ENCODE measurements at regions of chr1 and their contacts with region 1.

Region 1: DNA sequence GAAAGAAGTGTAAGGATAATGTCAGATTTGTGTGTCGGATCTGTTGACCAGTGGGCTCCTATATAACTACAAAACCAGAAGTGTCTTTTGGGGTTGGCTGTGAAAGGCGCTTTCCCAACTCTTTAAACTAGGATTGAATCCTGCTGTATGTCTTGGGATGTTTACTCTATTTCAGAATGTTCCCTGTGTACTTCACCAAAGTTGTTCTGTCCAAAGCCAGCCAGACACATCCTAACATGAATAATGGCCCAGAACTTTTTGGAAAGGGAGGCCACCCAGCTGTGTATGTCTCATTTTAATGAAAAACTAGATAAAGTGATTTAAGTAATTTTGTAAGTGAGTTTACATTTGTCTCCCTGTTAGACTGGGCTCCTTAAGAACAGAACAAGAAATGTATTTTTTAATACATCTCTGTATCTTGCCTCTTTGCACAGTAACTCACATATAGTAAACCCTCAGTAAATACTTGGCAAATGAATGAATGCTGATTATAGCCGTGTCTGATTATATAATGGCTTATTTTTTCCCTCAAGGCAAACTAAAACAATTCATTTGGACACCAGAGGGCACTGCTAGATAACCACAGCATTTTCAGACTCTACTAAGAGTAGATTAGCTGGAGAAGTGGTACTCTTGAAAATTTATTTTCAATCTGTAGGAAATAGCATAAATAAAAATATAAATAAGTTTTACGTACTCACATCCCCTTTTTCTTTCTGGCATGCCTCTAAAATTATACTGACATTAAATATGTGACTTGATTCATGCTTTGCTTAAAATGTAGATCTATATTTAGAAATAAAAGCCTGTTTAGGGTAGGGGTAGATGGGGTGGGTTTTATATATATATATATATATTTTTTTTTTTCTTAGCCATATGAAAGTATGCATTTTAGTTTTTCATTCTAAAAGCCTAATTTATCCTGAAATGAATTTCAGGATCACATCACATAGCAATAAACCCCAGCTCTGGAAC is 23.8 kb downstream of the TSEN15 start:
- DNase-seq: peak in 1 of 2 experiments; percentile 52
- H3K4me3 ChIP-seq: no peak overlapping the region
- H3K4me3 Mint-ChIP-seq: no peak overlapping the region
- H3K27ac Mint-ChIP-seq: no peak overlapping the region
- H3K4me1 ChIP-seq: no peaks in the 10 kb centered on the region
- H3K4me1 Mint-ChIP-seq: no peaks in the 10 kb centered on the region
- H3K27me3 ChIP-seq: no peaks in the 10 kb centered on the region
- H3K27me3 Mint-ChIP-seq: no peaks in the 10 kb centered on the region
- CTCF ChIP-seq: peak; percentile 58 to 64

Region 2: GRCh38 chr1:184222652-184223052 is 147.3 kb after region 1 on chr1:
- CTCF ChIA-PET with region 1: interaction called, 10 read pairs
- POLR2A ChIA-PET with region 1: no interaction called
- intact Hi-C with region 1: loop called (anchors 1 kb)
- DNase-seq: peak in 1 of 2 experiments; percentile 66
- H3K4me3 ChIP-seq: no peak overlapping the region
- H3K4me3 Mint-ChIP-seq: no peak overlapping the region
- H3K27ac Mint-ChIP-seq: no peak overlapping the region
- H3K4me1 ChIP-seq: no peaks in the 10 kb centered on the region
- H3K4me1 Mint-ChIP-seq: peaks cover 6% of the 10 kb centered on the region
- H3K27me3 ChIP-seq: no peaks in the 10 kb centered on the region
- H3K27me3 Mint-ChIP-seq: peaks cover 7% of the 10 kb centered on the region
- CTCF ChIP-seq: peak; percentile 91 to 95

Region 3: DNA sequence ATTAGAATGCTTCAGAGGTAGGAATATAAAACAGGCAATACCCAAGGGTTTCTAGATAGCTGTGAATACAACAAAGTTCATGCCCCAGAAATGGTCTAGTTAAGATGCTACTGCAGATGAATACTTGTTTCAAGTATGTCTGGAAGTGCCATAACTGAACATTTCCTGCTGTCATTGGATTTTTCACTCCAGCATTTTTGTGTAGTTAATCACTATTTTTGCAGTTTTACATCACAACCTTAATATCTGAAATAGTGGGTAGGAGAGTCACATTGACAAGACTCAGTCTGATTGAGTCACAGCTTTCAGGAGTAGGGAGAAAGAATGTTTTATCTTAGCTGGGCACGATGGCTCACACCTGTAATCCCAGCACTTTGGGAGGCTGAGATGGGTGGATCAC is 185.0 kb after region 1 on chr1:
- CTCF ChIA-PET with region 1: no interaction called
- POLR2A ChIA-PET with region 1: no interaction called
- intact Hi-C with region 1: no loop called
- DNase-seq: no peak
- H3K4me3 ChIP-seq: no peak overlapping the region
- H3K4me3 Mint-ChIP-seq: no peak overlapping the region
- H3K27ac Mint-ChIP-seq: no peak overlapping the region
- H3K4me1 ChIP-seq: no peaks in the 10 kb centered on the region
- H3K4me1 Mint-ChIP-seq: no peaks in the 10 kb centered on the region
- H3K27me3 ChIP-seq: no peaks in the 10 kb centered on the region
- H3K27me3 Mint-ChIP-seq: peaks cover 23% of the 10 kb centered on the region
- CTCF ChIP-seq: no peak

Region 4: DNA sequence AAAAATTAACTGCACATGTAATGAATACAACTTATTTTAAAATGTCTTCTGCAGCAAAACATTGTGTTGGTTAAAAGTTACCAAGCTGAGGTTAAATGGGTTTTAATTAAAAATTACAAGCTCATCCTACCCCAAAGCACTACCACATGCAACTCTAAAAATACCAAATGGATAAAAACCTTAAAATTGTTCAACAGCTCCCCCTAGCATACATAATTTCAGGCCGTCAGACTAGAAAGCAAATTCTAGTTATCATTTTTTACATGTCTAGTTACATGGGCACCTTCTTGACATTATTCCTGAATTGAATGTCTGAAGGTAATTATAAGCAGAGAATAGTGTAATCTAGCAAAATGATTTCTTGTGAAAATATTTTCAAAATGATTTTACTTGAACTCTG is 488.0 kb after region 1 on chr1:
- CTCF ChIA-PET with region 1: no interaction called
- POLR2A ChIA-PET with region 1: no interaction called
- intact Hi-C with region 1: loop called (anchors 10 kb)
- DNase-seq: peak in 1 of 2 experiments; percentile 9
- H3K4me3 ChIP-seq: no peak overlapping the region
- H3K4me3 Mint-ChIP-seq: no peak overlapping the region
- H3K27ac Mint-ChIP-seq: no peak overlapping the region
- H3K4me1 ChIP-seq: no peaks in the 10 kb centered on the region
- H3K4me1 Mint-ChIP-seq: no peaks in the 10 kb centered on the region
- H3K27me3 ChIP-seq: no peaks in the 10 kb centered on the region
- H3K27me3 Mint-ChIP-seq: peaks cover 2% of the 10 kb centered on the region
- CTCF ChIP-seq: peak in 1 of 2 experiments; percentile 30

Region 5: DNA sequence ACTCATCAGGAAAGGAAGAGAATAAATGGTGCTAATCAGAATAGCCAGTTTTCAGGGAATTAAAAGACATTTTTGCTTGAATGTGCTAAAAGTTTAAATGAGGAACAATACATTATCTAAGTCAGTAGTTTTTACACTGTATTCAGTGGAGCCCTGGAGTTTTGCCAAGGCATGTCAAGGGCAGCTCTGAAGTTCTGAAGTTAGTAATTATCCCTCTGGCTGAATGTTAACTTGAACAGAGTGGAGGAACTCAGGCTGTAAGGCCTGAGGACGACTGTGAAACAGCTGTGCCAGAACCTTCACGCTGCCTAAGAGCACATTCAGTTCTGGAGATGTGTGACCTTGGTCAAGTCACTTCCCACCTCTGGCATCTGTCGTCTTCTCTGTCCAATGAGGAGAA is 611.2 kb after region 1 on chr1:
- CTCF ChIA-PET with region 1: interaction called, 12 read pairs
- POLR2A ChIA-PET with region 1: no interaction called
- intact Hi-C with region 1: loop called (anchors 1 kb)
- DNase-seq: no peak
- H3K4me3 ChIP-seq: no peak overlapping the region
- H3K4me3 Mint-ChIP-seq: no peak overlapping the region
- H3K27ac Mint-ChIP-seq: no peak overlapping the region
- H3K4me1 ChIP-seq: no peaks in the 10 kb centered on the region
- H3K4me1 Mint-ChIP-seq: no peaks in the 10 kb centered on the region
- H3K27me3 ChIP-seq: no peaks in the 10 kb centered on the region
- H3K27me3 Mint-ChIP-seq: no peaks in the 10 kb centered on the region
- CTCF ChIP-seq: no peak

Region 6: GRCh38 chr1:184691719-184692324 is 616.5 kb after region 1 on chr1:
- CTCF ChIA-PET with region 1: interaction called, 12 read pairs
- POLR2A ChIA-PET with region 1: no interaction called
- intact Hi-C with region 1: loop called (anchors 1 kb)
- DNase-seq: peak in 1 of 2 experiments; percentile 36
- H3K4me3 ChIP-seq: no peak overlapping the region
- H3K4me3 Mint-ChIP-seq: no peak overlapping the region
- H3K27ac Mint-ChIP-seq: no peak overlapping the region
- H3K4me1 ChIP-seq: no peaks in the 10 kb centered on the region
- H3K4me1 Mint-ChIP-seq: no peaks in the 10 kb centered on the region
- H3K27me3 ChIP-seq: no peaks in the 10 kb centered on the region
- H3K27me3 Mint-ChIP-seq: no peaks in the 10 kb centered on the region
- CTCF ChIP-seq: peak; percentile 75 to 89